ENCODE measurements at regions of chr18 and their contacts with region 1.

Region 1: GRCh38 chr18:23586249-23587196 is at the start of gene NPC1:
- DNase-seq: peak; percentile 94
- H3K4me3 ChIP-seq: peak within 1 kb of the TSS; percentile 87
- H3K27ac ChIP-seq: peak within 1 kb of the TSS; percentile 85
- H3K4me1 ChIP-seq: peaks cover 22% of the 10 kb centered on the region
- CTCF ChIP-seq: peak; percentile 84
- total RNA-seq, gene NPC1: 22.3 and 26.0 TPM in 2 replicates

Region 2: GRCh38 chr18:23422672-23423418 is 163.7 kb before region 1 on chr18:
- CTCF ChIA-PET with region 1: no interaction called
- POLR2A ChIA-PET with region 1: no interaction called
- intact Hi-C with region 1: loop called (anchors 10 kb)
- DNase-seq: peak; percentile 87
- H3K4me3 ChIP-seq: peak overlapping the region; percentile 35
- H3K27ac ChIP-seq: peak overlapping the region; percentile 89
- H3K4me1 ChIP-seq: peaks cover 47% of the 10 kb centered on the region
- CTCF ChIP-seq: peak; percentile 50

Region 3: DNA sequence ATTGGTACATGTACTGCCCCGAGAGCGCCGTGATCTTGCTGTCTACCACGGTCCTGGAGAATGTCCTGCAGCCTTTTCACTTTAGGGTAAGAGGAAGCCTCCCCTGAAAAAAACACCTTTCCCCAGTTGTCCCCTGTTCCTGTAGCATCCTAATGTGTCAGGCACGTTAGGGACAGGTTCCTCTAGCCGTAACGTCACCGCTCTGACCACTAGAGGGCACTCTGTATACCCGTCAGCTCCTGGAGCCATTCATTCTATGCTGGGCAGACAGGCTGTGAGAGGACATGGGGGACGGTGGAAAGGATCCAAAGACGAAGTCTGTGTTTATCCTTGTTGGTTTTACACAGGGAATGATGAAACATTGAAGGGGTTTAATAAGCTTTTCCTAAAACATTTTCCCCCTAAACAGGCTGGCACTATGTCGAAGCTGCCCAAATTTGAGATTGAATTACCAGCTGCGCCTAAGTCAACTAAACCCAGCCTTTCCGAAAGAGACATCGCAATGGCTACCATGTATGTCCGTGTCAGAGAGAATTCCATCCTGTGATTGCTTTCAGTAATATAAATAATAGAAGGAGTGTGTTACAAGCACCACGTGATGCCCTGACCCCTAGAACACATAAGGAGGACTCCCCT is 70.5 kb before region 1 on chr18:
- CTCF ChIA-PET with region 1: interaction called, 3 read pairs
- POLR2A ChIA-PET with region 1: interaction called, 3 read pairs
- intact Hi-C with region 1: loop called (anchors 1 kb)
- DNase-seq: peak; percentile 81
- H3K4me3 ChIP-seq: no peak overlapping the region
- H3K27ac ChIP-seq: no peak overlapping the region
- H3K4me1 ChIP-seq: no peaks in the 10 kb centered on the region
- CTCF ChIP-seq: peak; percentile 97